Dendritic cell treated with granulocyte-macrophage colony-stimulating factor and Interleukin-4, amounts not matched to agents 40 ng/mL and 50 ng/mL, for 4 days (primary cell): ENCODE measurements at regions of chr16 and their contacts with region 1.

Region 1: GRCh38 chr16:50741808-50742575 is at the start of gene CYLD:
- H3K4me3 Mint-ChIP-seq: peak within 1 kb of the TSS; percentile 77
- H3K27ac Mint-ChIP-seq: peak within 1 kb of the TSS; percentile 91
- H3K4me1 Mint-ChIP-seq: peaks cover 70% of the 10 kb centered on the region
- H3K27me3 Mint-ChIP-seq: no peaks in the 10 kb centered on the region

Region 2: DNA sequence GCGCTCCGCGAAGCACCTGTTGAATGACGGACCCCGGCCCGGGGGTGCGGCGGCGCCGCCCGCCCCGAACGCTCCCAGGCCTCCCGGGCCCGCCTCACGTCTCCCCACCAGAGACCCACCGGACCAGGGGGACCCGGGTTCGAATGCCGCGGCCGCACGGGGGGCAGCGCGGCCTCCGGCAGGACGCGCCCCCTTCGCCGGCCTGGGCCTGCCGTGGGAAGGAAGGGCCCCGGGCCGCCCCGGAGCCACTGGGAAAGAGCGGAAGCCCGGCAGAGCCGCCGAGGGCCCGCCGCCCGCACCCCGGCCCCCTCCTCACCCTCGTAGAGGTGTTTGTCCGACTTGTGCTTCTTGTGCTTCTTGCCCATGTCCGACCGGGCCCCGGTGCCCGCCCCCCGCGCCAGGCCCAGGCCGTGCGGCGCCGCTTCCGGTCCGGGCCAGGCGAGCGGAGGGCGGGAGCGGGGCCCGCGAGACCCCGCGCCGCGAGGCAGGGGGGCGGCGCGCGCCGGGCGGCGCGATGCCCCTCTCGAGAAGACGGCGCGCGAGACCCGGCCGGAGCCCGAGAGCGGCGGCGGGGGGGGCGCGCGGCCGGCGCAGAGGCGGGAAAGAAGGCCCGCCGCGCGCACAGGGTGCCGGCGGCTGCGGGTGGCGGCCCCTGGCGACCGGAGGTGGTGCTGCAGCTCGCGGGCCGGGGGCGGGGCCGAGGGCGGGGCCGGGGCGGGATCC is 373.4 kb before region 1 on chr16 and contains the start of gene BRD7:
- intact Hi-C with region 1: loop called (anchors 10 kb)
- H3K4me3 Mint-ChIP-seq: peak within 1 kb of the TSS; percentile 80
- H3K27ac Mint-ChIP-seq: peak within 1 kb of the TSS; percentile 84
- H3K4me1 Mint-ChIP-seq: peaks cover 38% of the 10 kb centered on the region
- H3K27me3 Mint-ChIP-seq: peaks cover 4% of the 10 kb centered on the region

Region 3: DNA sequence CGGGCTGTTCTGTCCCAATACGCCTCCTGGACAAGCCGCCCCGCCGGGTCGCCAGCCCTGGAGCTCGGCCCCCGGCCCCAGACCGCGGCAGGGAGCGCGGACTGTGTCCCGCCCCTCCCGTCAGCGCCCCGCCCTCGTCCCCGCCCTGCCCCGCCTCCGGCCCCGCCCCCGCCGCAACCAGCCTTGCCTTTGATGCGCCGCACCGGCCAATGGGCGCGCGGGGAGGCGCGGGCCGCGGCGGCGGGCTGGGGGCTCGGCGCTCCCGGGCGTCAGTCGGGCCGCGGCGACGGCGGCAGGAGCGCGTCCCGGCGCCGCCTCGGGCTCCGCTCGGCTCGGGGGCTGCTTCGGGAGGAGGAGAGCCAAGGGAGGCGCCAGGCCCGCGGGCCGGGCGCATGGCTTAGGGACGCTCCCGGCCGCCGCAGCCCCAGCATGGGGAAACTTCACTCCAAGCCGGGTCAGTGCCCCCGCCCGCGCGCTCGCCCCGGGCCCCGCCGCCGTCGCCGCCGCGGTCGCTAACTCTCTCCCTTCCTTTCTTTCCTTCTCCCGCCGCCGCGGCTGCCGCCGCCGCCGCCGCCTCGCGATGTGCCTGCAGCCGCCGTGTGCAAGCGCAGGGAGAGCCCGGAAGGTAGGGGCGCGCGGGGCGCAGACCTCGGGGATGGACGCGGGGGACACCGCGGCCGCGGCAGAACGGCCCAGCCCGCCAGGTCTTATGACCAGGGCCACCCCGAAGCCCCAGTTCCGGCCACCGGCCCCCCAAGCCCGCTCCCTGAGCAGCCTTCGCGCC is 193.7 kb before region 1 on chr16 and contains the start of gene NKD1:
- intact Hi-C with region 1: loop called (anchors 10 kb)
- H3K4me3 Mint-ChIP-seq: peak within 1 kb of the TSS; percentile 73
- H3K27ac Mint-ChIP-seq: peak within 1 kb of the TSS; percentile 48
- H3K4me1 Mint-ChIP-seq: peaks cover 13% of the 10 kb centered on the region
- H3K27me3 Mint-ChIP-seq: peaks cover 75% of the 10 kb centered on the region

Region 4: GRCh38 chr16:50681021-50681885 is 60.7 kb before region 1 on chr16 and contains the start of gene SNX20:
- intact Hi-C with region 1: loop called (anchors 2 kb)
- H3K4me3 Mint-ChIP-seq: peak within 1 kb of the TSS; percentile 90
- H3K27ac Mint-ChIP-seq: peak within 1 kb of the TSS; percentile 90
- H3K4me1 Mint-ChIP-seq: peaks cover 80% of the 10 kb centered on the region
- H3K27me3 Mint-ChIP-seq: no peaks in the 10 kb centered on the region

Region 5: GRCh38 chr16:50696575-50697420 is 45.2 kb before region 1 on chr16:
- intact Hi-C with region 1: loop called (anchors 5 kb)
- H3K4me3 Mint-ChIP-seq: peak overlapping the region; percentile 91
- H3K27ac Mint-ChIP-seq: peak overlapping the region; percentile 91
- H3K4me1 Mint-ChIP-seq: peaks cover 90% of the 10 kb centered on the region
- H3K27me3 Mint-ChIP-seq: no peaks in the 10 kb centered on the region

Region 6: DNA sequence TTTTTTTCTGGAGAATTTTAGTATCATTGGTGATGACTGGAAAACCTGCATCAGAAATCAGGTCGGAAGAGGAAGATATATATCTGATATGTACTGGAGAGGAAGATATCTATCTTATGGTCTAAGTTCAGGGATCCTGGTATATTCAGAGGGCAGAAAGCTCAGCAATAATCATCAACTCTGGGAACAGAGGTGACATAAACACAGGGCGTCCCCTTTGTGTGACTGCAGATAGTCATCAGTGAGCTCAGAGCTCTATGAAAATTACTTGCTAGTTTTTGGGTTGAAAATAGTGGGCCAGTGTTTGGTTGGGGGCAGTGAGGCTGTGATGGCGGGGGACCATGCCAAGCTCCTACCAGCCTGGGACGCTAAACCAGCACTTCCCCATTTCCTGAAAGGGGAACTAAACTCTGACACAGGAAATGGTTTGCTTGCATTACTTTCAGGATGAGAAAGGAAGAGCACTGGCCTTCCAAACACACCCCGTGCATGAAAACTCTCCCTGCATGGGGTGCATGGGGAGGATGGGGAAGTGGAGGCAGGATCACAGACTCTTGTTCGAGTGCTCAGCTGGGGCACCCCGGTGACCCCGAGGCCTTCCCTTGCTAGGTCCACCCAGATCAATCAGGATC is 32.8 kb before region 1 on chr16:
- intact Hi-C with region 1: loop called (anchors 1 kb)
- H3K4me3 Mint-ChIP-seq: peak overlapping the region; percentile 64
- H3K27ac Mint-ChIP-seq: peak overlapping the region; percentile 99
- H3K4me1 Mint-ChIP-seq: peaks cover 95% of the 10 kb centered on the region
- H3K27me3 Mint-ChIP-seq: no peaks in the 10 kb centered on the region

Region 7: GRCh38 chr16:50724306-50724705 is 17.7 kb before region 1 on chr16:
- intact Hi-C with region 1: no loop called
- H3K4me3 Mint-ChIP-seq: no peak overlapping the region
- H3K27ac Mint-ChIP-seq: no peak overlapping the region
- H3K4me1 Mint-ChIP-seq: peaks cover 28% of the 10 kb centered on the region
- H3K27me3 Mint-ChIP-seq: no peaks in the 10 kb centered on the region